ENCODE measurements at regions of chr6 and their contacts with region 1.

Region 1: GRCh38 chr6:93272211-93272610 is 147.1 kb downstream of the EPHA7 start:
- DNase-seq: peak in 33 of 42 donors; percentile 1 to 72 (median 28)

Region 2: DNA sequence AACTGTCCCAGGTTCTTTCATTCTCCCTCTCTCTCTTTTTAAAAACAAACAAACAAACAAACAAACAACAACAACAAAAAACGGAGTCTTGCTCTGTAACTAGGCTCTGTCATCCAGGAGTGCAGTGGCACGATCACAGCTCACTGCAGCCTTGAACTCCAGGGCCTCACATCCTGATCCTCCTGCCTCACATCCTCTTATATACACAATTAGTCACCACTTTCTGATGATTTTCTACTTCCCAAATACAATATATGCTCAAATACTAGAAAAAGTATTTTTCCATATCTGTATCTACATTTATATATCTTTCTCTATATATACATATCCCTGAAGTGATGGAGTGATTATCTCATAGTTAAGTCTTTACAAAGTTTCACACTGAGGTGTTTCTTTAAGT is 23.6 kb before region 1 on chr6:
- intact Hi-C with region 1: no loop called
- DNase-seq: no peak

Region 3: GRCh38 chr6:93327857-93328256 is 55.6 kb after region 1 on chr6:
- intact Hi-C with region 1: no loop called
- DNase-seq: no peak

Region 4: DNA sequence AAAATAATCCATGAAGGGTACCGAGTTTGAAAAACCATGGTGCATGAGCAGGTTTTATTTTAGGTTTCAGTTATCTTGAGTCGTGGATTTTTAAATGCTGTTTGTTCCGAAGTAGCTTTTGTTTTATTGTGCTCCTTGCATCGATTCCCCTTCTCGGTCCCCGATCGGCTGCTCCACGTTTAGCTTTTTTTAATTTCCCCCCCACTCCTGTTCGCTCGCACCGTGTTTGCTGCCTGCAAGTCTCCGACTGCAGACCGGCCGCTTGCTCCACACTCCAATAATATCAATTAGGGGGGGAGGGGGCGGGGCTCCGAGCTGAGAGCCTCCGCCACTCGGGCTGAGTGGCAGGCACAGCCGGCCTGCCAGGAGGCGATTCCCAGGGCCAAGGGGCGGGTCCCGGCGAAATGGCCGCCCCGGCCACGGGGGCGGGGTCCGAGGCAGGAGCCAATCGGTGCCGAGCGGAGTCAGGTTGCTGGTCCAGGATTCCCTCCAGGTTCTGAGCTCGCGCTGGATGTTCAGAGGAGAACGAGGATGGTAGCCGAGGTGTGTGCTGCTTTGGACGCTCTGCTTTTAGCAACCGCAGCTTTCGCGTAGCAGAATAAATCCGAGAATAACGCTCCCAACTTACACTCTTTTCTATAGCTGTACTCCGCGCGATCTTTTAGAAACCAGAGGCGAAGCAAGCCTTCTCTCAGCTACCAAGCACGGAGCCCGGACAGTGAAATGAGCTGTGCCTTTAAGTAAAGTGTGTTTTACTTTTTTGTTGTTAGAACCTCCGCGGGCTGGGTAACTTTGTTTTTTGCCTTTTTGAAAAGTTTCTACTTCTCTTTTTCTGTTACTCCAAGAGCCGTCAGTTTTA is 147.3 kb after region 1 on chr6 and contains the start of gene EPHA7:
- intact Hi-C with region 1: loop called (anchors 10 kb)
- DNase-seq: peak; percentile 90 to 99 (median 97)

Region 5: DNA sequence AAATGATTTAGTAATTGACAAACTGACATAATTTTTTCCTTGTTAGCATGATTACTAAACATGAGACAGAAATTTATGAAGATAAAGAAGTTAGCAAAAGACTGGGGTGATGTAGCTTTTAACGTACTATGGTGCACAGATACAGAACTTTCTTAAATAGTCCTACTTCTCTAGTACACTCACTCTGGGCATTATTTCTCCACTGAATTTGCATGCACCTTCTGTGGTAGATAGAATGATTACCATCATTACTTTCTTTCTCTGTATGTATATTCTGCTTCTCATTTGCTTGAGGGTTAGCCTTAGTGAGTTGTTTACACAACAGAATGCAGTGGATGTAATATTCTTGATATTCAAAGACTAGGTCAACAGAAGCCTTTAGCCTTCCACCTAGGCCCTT is 320.2 kb after region 1 on chr6:
- intact Hi-C with region 1: no loop called
- DNase-seq: no peak